ENCODE measurements at regions of chr3 and their contacts with region 1.

Region 1: GRCh38 chr3:55567615-55568014 is 80.5 kb upstream of the WNT5A start:
- DNase-seq: no peak
- H3K4me3 ChIP-seq: no peak overlapping the region
- H3K4me3 Mint-ChIP-seq: no peak overlapping the region
- H3K27ac Mint-ChIP-seq: peak overlapping the region; percentile 3
- H3K4me1 ChIP-seq: peaks cover 32% of the 10 kb centered on the region
- H3K4me1 Mint-ChIP-seq: peaks cover 10% of the 10 kb centered on the region
- H3K27me3 ChIP-seq: no peaks in the 10 kb centered on the region
- H3K27me3 Mint-ChIP-seq: no peaks in the 10 kb centered on the region
- CTCF ChIP-seq: no peak

Region 2: DNA sequence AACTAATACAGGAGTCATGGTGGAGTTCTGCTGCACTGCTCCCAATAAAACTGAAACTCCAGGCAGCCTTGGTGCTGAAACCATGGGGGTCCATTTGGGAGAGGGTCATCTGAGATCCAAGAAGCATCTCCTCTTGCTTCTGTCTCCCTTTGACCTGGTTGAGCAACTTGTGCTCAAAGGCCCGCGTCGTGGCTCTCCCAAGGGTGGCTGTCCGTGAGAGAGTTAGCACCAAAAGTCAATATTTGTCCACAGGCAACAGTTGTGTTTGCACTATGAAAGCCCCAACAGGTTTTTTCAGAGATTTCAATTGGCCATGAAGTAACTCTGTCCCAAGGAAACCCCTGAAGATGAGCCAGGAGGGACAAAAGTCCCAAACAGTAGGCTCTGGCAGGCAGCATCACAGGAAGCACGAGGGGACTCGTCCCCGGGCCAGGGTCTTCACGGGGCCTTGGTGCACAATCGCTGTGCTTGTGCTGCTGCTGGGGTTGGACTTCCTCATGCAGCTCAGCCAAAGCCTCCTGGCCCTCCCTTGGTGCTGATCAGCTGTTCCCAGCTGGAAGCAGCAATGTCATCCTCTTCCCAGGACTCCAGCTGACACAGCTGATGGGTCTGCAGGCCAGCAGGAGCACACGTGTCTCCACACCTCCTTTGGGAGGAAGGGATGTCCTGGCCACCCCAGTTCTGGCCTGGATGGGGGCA is 41.1 kb before region 1 on chr3:
- CTCF ChIA-PET with region 1: no interaction called
- POLR2A ChIA-PET with region 1: no interaction called
- intact Hi-C with region 1: loop called (anchors 2 kb)
- DNase-seq: peak; percentile 73 to 78
- H3K4me3 ChIP-seq: no peak overlapping the region
- H3K4me3 Mint-ChIP-seq: no peak overlapping the region
- H3K27ac Mint-ChIP-seq: no peak overlapping the region
- H3K4me1 ChIP-seq: peaks cover 26% of the 10 kb centered on the region
- H3K4me1 Mint-ChIP-seq: peaks cover 23% of the 10 kb centered on the region
- H3K27me3 ChIP-seq: no peaks in the 10 kb centered on the region
- H3K27me3 Mint-ChIP-seq: no peaks in the 10 kb centered on the region
- CTCF ChIP-seq: no peak

Region 3: DNA sequence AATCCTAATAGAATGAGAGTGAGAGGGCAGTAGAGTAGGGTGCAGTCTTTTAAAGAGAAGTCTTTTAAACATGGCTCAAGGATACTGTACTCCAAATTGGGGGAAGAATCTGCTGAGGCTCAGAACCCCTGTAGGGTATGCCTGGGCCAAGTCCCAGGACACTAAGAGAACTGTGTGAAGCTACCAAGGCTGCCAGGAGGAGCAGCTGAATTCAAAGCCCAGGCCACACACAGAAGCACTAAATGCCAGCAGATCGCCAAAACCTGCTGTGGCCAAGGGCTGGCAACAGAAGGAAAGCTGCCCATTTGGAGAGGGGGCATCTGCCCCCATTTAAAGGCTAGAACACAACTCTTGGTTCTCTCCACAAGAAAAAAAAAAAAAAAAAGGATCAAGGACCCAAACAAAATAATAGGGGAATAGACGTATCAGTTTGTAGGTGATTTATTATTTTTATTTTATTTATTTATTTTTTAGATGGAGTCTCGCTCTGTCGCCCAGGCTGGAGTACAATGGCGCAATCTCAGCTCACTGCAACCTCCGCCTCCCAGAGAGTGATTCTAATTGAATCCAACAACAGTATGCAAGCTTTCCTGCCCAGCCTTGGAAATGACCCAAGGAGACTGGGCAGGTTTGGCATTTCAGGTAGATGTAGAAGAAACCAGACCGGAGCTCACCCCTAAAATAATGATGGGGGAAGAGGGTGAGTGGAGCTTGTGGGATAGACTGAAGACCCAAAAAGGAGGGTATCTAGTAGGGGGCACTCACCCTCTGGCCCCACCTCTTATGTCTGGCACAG is 198.5 kb after region 1 on chr3:
- CTCF ChIA-PET with region 1: no interaction called
- POLR2A ChIA-PET with region 1: no interaction called
- intact Hi-C with region 1: no loop called
- DNase-seq: no peak
- H3K4me3 ChIP-seq: no peak overlapping the region
- H3K4me3 Mint-ChIP-seq: no peak overlapping the region
- H3K27ac Mint-ChIP-seq: no peak overlapping the region
- H3K4me1 ChIP-seq: no peaks in the 10 kb centered on the region
- H3K4me1 Mint-ChIP-seq: no peaks in the 10 kb centered on the region
- H3K27me3 ChIP-seq: no peaks in the 10 kb centered on the region; the same call in 1 of the 2 replicates
- H3K27me3 Mint-ChIP-seq: peaks cover 7% of the 10 kb centered on the region
- CTCF ChIP-seq: no peak

Region 4: GRCh38 chr3:55923207-55923606 is 355.6 kb after region 1 on chr3:
- CTCF ChIA-PET with region 1: no interaction called
- POLR2A ChIA-PET with region 1: no interaction called
- intact Hi-C with region 1: no loop called
- DNase-seq: no peak
- H3K4me3 ChIP-seq: no peak overlapping the region
- H3K4me3 Mint-ChIP-seq: no peak overlapping the region
- H3K27ac Mint-ChIP-seq: no peak overlapping the region
- H3K4me1 ChIP-seq: no peaks in the 10 kb centered on the region
- H3K4me1 Mint-ChIP-seq: no peaks in the 10 kb centered on the region
- H3K27me3 ChIP-seq: no peaks in the 10 kb centered on the region
- H3K27me3 Mint-ChIP-seq: peaks cover 12% of the 10 kb centered on the region
- CTCF ChIP-seq: no peak